ENCODE measurements at regions of chr2 and their contacts with region 1.

Region 1: DNA sequence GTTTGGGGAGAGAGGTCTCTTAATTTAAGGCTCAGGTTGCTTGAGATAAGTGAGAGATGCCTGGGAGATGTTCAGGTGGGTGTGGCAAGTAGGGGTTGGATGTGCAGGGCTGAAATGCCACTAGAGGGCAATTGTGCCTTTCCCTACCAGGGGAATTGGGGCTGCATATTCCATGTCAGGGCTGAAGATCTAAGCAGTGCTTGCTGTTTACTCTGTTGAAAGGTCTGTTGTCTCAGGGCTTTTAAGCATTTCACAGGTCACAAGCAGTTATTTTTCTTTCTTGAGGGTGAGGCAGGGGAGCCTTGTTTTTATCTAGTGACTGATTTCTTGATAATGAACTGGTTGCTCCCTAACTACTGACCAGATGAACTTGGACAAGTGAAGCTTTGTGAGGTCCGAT is 7.9 kb downstream of the CCDC85A start:
- DNase-seq: no peak
- H3K4me3 ChIP-seq: no peak overlapping the region
- H3K27ac ChIP-seq: no peak overlapping the region
- H3K4me1 ChIP-seq: peaks cover 44% of the 10 kb centered on the region
- H3K27me3 ChIP-seq: peaks cover 15% of the 10 kb centered on the region
- CTCF ChIP-seq: peak; percentile 72

Region 2: GRCh38 chr2:56749152-56749752 is 557.6 kb after region 1 on chr2:
- intact Hi-C with region 1: loop called (anchors 10 kb)
- DNase-seq: no peak
- H3K4me3 ChIP-seq: no peak overlapping the region
- H3K27ac ChIP-seq: no peak overlapping the region
- H3K4me1 ChIP-seq: no peaks in the 10 kb centered on the region
- H3K27me3 ChIP-seq: no peaks in the 10 kb centered on the region
- CTCF ChIP-seq: peak; percentile 70